Heart right ventricle (tissue), 16 donors: ENCODE measurements at regions of chr5 and their contacts with region 1.

Region 1: GRCh38 chr5:111550279-111551020 is 38.1 kb upstream of the STARD4 start:
- DNase-seq: peak; percentile 23 to 95
- ATAC-seq: peak; percentile 90 to 95 (median 92)
- H3K4me3 ChIP-seq: peak overlapping the region in 2 of 10 donors; percentile 1 to 21
- H3K27ac ChIP-seq: peak overlapping the region; percentile 11 to 85 (median 72)
- H3K4me1 ChIP-seq: peaks cover 2 to 38% (median 22%) of the 10 kb centered on the region in 9 donors
- H3K27me3 ChIP-seq: no peaks in the 10 kb centered on the region
- CTCF ChIP-seq: peak; percentile 52 to 84 (median 70)

Region 2: GRCh38 chr5:110590187-110590586 is 960.3 kb before region 1 on chr5:
- intact Hi-C with region 1: no loop called
- DNase-seq: no peak
- ATAC-seq: no peak
- H3K4me3 ChIP-seq: no peak overlapping the region
- H3K27ac ChIP-seq: no peak overlapping the region
- H3K4me1 ChIP-seq: no peaks in the 10 kb centered on the region
- H3K27me3 ChIP-seq: no peaks in the 10 kb centered on the region
- CTCF ChIP-seq: peak in 7 of 9 donors; percentile 12 to 43 (median 23)

Region 3: DNA sequence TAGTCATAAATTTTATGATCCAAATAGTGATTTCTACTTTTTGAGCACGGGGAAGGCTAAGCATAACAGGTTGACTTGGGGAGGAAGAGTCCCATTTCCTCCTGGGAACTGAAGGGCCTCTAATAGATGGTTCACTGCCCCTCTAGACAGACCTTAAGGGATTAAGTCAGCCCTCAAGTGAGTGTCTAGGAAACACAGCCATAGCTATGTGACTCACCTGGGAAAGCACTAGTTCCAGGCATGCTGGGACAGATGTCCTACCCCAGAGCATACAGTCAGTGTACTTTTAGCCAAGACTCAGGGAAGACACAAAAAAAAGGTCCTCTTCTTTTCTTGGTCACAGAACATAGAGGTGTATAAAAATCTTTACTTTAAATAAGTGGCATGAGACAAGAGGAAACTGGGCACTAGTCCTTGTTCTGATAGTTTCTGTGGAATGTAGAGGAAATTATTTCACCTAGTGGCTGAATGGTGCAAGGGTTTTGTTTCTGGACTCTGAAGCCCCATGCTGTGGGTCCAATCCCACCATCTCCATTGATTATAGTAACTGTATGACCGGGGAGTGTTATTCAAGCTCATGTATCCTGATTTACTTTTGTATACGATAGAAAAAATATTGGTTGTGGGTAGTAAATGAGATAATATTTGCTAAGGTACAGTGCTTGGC is 120.5 kb after region 1 on chr5:
- intact Hi-C with region 1: loop called in 1 of 10 experiments (anchors 10 kb)
- DNase-seq: no peak
- ATAC-seq: no peak
- H3K4me3 ChIP-seq: no peak overlapping the region
- H3K27ac ChIP-seq: no peak overlapping the region
- H3K4me1 ChIP-seq: no peaks in the 10 kb centered on the region
- H3K27me3 ChIP-seq: no peaks in the 10 kb centered on the region
- CTCF ChIP-seq: no peak

Region 4: DNA sequence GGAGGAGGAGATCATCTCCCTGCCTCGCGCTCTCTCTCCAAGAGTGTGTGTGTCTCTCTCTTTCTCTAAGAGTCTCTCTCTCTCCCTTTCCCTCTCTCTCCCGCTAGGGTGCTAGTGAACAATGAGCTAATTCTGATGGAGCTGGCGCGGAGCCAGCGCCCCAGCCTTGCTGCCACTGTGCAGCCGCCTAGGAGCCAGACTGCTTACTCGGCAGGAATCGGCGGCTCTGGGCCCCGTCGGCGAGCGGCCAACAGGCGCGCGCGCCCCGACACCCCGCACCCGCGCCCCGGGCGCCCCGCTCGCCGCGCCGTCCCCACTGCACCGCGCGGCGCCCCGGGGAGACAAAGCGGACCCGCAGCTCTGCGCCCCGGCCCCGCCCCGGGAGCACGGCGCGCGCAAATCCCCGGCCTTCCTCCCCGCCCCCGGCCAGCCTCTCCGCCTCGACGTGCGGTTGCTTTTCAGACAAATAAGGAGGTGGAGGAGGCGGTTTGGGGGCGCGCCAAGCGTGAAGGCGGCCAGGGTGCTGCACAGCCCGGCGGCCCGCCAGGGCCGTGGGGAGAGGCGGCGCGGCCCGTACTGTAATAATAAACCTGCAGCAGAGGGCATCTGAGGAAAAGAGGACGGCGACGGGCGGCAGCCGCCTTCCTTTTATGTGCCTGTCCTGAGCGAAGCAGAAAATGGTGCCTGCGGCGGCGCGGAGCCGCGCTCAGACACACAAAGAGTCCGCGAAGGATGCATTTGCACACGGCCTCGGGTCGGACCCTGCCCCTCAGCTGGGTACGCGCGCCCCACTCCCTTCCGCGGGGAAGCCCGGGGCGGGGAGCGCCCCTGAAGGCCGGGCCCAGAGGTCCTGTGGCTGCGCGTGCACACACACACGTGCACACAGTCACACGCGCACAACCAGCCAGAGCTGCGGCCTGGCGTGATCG is 207.2 kb after region 1 on chr5:
- intact Hi-C with region 1: loop called in 9 of 10 experiments (anchors 1 to 10 kb)
- DNase-seq: peak; percentile 97
- ATAC-seq: peak; percentile 89 to 96 (median 90)
- H3K4me3 ChIP-seq: peak overlapping the region; percentile 19 to 78 (median 70)
- H3K27ac ChIP-seq: peak overlapping the region; percentile 85 to 97 (median 92)
- H3K4me1 ChIP-seq: peaks cover 0 to 42% (median 29%) of the 10 kb centered on the region in 9 donors
- H3K27me3 ChIP-seq: no peaks in the 10 kb centered on the region
- CTCF ChIP-seq: peak in 6 of 9 donors; percentile 20 to 45 (median 34)

Region 5: DNA sequence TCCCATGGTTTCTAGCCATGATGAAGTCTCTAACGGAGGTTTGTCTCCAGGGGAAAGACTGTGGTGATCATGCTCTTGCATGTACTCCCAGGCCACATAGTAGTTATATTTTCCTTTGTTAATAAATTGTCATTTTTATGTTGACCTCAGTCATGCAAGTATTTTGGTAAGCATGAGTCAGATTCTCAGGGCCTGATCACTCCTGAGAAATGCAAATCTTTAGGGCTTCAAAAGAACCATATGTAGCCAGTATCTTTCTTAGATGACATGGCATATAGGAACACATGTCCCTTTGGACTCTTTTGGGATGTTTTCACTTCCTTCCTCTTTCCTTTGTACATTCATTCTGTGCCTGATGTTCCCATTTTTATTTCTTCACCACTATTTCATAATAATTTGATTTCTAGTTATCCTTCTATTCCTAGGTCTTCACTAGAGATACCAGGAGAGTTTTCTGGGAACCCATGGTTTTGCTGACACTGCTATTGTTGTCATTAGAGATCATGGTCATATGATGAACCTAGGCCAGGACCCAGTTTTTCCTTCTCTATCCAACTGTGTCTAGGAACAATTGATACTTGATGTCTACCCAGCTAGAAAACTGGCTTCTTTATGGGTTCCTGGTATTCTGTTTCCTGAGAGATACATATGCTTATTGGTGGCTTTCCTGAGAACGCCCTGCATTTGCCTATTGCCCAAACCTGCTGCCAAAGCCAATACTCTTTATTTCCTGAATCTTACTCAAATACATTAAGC is 454.6 kb after region 1 on chr5:
- intact Hi-C with region 1: loop called in 2 of 10 experiments (anchors 10 kb)
- DNase-seq: no peak
- ATAC-seq: no peak
- H3K4me3 ChIP-seq: no peak overlapping the region
- H3K27ac ChIP-seq: no peak overlapping the region
- H3K4me1 ChIP-seq: peaks cover 0 to 12% (median 0%) of the 10 kb centered on the region in 9 donors
- H3K27me3 ChIP-seq: no peaks in the 10 kb centered on the region
- CTCF ChIP-seq: no peak